Heart left ventricle (tissue), 16 donors: ENCODE measurements at regions of chr11 and their contacts with region 1.

Region 1: GRCh38 chr11:74634537-74634936 is 42.2 kb downstream of the POLD3 start:
- DNase-seq: no peak
- ATAC-seq: peak in 3 of 4 donors; percentile 71 to 84 (median 78)
- H3K4me3 ChIP-seq: no peak overlapping the region
- H3K27ac ChIP-seq: peak overlapping the region in 1 of 12 donors; percentile 74
- H3K4me1 ChIP-seq: peaks cover 0 to 11% (median 0%) of the 10 kb centered on the region in 12 donors
- H3K27me3 ChIP-seq: no peaks in the 10 kb centered on the region
- CTCF ChIP-seq: peak in 10 of 12 donors; percentile 6 to 50 (median 38)
- POLR2A ChIP-seq: no peak

Region 2: GRCh38 chr11:74720596-74721478 is 86.3 kb after region 1 on chr11:
- intact Hi-C with region 1: loop called in 8 of 10 experiments (anchors 1 to 5 kb)
- DNase-seq: peak; percentile 55 to 89 (median 81)
- ATAC-seq: peak; percentile 53 to 86 (median 84)
- H3K4me3 ChIP-seq: no peak overlapping the region
- H3K27ac ChIP-seq: peak overlapping the region in 11 of 12 donors; percentile 48 to 89 (median 65)
- H3K4me1 ChIP-seq: peaks cover 0 to 37% (median 17%) of the 10 kb centered on the region in 12 donors
- H3K27me3 ChIP-seq: peaks cover 0 to 2% (median 0%) of the 10 kb centered on the region in 9 donors
- CTCF ChIP-seq: no peak
- POLR2A ChIP-seq: no peak

Region 3: GRCh38 chr11:74937696-74938475 is 303.3 kb after region 1 on chr11:
- intact Hi-C with region 1: no loop called
- DNase-seq: no peak
- ATAC-seq: no peak
- H3K4me3 ChIP-seq: no peak overlapping the region
- H3K27ac ChIP-seq: no peak overlapping the region
- H3K4me1 ChIP-seq: peaks cover 0 to 15% (median 0%) of the 10 kb centered on the region in 12 donors
- H3K27me3 ChIP-seq: no peaks in the 10 kb centered on the region
- CTCF ChIP-seq: no peak
- POLR2A ChIP-seq: no peak